ENCODE measurements at regions of chr18 and their contacts with region 1.

Region 1: DNA sequence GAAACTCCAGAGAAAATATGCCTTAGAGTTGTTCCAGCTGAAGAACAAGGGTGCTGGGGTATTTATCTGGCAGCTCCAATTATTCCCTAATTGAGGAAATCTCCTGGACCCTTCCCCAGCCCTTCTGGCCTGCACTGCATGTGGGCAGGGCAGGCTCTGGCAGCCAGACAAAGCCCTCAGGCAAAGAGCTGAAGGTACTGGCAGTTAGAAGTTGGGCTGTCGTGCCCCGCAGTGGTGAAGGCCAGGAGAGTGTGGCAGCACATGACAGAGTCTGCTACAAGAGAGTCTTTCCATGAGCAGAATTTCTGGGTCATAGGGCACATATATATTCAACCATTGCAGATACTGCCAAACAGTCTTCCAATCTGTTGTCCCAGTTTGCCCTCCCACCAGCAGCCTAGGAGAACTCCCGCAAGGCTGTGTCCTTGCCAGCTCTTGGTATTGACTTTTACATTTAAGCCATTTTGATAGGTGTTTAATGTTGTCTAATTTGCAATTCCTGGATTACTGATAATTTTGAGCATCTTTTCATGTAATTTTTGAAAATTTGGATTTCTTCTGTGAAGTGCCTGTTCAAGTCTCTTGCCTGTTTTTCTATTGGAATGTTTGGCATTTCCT is 26.6 kb downstream of the ONECUT2 start:
- DNase-seq: no peak
- ATAC-seq: no peak
- H3K4me3 ChIP-seq: no peak overlapping the region
- H3K4me3 Mint-ChIP-seq: no peak overlapping the region
- H3K27ac ChIP-seq: no peak overlapping the region
- H3K27ac Mint-ChIP-seq: no peak overlapping the region
- H3K4me1 ChIP-seq: no peaks in the 10 kb centered on the region
- H3K4me1 Mint-ChIP-seq: no peaks in the 10 kb centered on the region
- H3K27me3 ChIP-seq: peaks cover 0 to 4% of the 10 kb centered on the region in 2 experiments
- H3K27me3 Mint-ChIP-seq: peaks cover 24 to 25% of the 10 kb centered on the region in 2 donors

Region 2: GRCh38 chr18:57294547-57294946 is 167.2 kb before region 1 on chr18:
- CTCF ChIA-PET with region 1: no interaction called
- POLR2A ChIA-PET with region 1: interaction called in 1 of 2 experiments, 12 read pairs
- DNase-seq: no peak
- ATAC-seq: no peak
- H3K4me3 ChIP-seq: no peak overlapping the region
- H3K4me3 Mint-ChIP-seq: no peak overlapping the region
- H3K27ac ChIP-seq: no peak overlapping the region
- H3K27ac Mint-ChIP-seq: no peak overlapping the region
- H3K4me1 ChIP-seq: no peaks in the 10 kb centered on the region
- H3K4me1 Mint-ChIP-seq: no peaks in the 10 kb centered on the region
- H3K27me3 ChIP-seq: peaks cover 0 to 4% of the 10 kb centered on the region in 2 experiments
- H3K27me3 Mint-ChIP-seq: peaks cover 2 to 13% of the 10 kb centered on the region in 2 donors

Measured in T-cell (primary cell).